Panc1 (cell line): ENCODE measurements at regions of chr2 and their contacts with region 1.

Region 1: DNA sequence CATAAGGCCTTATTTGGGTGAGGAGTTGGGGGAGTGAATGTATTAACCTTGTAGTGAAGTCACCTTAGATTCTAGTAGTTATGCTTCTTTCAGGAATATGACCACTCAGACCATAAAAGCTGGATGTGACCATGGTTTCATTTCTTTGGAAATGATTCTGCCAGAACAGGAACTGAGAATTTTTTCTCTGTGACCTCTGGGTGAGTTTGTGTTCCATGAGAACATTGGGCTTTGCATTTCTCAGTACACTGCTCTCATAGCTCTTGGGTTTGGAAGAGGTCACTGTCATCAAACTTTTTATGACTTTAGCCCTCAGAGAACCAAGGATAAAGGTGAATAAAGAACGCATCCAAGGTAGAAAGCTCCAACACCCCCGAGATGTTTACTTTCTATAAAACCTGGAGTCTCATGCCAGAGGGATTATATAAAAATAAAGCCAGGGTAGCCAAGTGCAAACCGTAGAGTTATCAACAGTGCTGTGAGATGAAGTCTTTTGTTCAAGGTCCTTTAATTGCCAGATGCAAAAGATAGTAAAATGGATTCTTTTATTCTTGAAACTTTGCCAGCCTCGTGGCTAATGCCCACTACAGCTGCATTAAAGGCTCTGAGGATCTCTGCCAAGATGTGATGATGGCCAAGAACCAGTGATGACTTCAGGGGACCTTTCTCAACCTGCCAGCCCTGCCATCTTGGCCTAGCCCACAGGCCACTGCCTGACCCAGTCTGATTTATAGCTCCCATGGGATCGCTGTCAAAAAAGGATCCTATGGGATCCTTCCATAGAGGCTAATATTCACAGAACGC is 27.8 kb upstream of the MAT2A start:
- DNase-seq: no peak
- ATAC-seq: peak; percentile 87
- H3K4me3 ChIP-seq: no peak overlapping the region
- H3K27ac ChIP-seq: peak overlapping the region; percentile 94
- H3K4me1 ChIP-seq: peaks cover 64% of the 10 kb centered on the region
- H3K27me3 ChIP-seq: no peaks in the 10 kb centered on the region
- CTCF ChIP-seq: no peak

Region 2: GRCh38 chr2:84676295-84676694 is 834.9 kb before region 1 on chr2:
- CTCF ChIA-PET with region 1: no interaction called
- POLR2A ChIA-PET with region 1: no interaction called
- in situ Hi-C with region 1: no loop called
- intact Hi-C with region 1: no loop called
- DNase-seq: no peak
- ATAC-seq: no peak
- H3K4me3 ChIP-seq: no peak overlapping the region
- H3K27ac ChIP-seq: no peak overlapping the region
- H3K4me1 ChIP-seq: no peaks in the 10 kb centered on the region
- H3K27me3 ChIP-seq: peaks cover 4% of the 10 kb centered on the region; the same call in 1 of the 2 replicates
- CTCF ChIP-seq: no peak

Region 3: DNA sequence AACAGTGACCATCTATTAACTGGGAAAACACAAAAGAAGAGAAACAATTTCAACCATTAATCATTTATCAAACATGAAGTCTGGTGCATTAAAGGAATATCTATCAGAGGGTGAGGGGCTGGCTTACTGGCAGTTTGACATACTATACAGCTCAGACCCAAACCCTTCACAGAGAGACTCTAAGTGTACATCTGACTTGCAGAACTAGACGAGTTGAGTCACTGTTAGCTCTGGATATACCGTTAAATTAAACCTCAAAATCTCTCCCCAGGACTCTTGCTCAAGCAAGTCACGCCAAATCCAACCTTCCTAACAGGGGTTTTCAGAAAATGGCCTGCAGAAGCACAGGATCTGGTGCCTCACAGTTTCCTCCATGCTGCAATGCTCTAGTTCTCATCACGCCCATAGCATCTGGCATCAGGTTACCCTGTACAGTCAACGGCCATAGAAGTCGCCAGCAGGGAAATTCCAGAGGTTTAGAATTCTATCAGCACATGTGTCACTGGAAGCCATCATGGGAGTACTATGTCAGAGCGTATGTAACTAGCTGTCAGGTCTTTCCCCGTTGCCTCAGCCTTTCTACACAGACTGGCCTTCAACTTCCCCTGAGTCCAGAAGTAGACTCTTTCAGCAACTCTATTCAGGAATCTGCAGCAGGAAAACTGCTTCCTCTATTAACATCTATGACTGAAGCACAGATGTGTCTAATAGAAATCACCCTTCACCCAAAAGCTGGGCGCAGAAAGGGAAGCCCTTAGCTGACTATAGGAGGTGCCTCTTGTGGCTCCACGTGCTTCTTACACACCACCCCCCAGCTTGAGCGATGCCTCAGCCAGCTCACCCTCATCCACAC is 192.8 kb before region 1 on chr2:
- CTCF ChIA-PET with region 1: no interaction called
- POLR2A ChIA-PET with region 1: no interaction called
- in situ Hi-C with region 1: no loop called
- intact Hi-C with region 1: no loop called
- DNase-seq: no peak
- ATAC-seq: peak; percentile 31; the same call in 1 of the 2 replicates
- H3K4me3 ChIP-seq: no peak overlapping the region
- H3K27ac ChIP-seq: no peak overlapping the region
- H3K4me1 ChIP-seq: no peaks in the 10 kb centered on the region
- H3K27me3 ChIP-seq: no peaks in the 10 kb centered on the region
- CTCF ChIP-seq: no peak

Region 4: DNA sequence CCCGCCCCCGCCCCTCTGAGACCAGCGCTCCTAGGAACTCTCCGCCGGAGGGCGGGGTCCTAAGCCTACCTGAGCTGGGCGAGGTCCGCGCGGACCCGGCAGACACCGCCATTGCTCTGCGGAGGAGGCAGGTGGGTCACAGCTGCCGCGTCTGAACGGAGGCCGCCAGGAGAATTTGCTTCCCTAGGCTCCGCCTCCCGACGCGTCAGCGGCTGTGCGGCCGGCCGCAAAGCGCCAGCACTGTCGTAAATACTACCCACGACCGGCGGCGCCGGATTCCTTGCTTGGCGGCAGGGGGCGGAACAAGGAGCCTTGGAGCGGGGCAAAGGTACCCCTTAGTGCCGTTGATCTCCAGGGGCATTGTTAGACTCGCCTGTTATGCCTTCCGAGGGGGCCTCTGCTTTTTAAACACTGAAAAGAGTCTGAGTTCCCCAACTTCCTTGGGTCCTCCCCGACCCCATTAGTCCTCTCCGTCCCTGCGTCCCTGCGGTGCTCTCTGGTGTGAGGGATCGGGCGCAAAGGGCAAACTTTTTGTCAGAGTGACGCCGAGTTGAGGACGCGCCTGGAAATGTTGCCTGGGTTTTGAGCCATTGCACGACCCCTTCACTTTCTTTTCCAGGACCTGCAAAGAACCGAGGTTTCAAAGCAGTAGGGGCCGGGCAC is 50.2 kb after region 1 on chr2 and contains the start of gene GGCX:
- CTCF ChIA-PET with region 1: no interaction called
- POLR2A ChIA-PET with region 1: interaction called, 11 read pairs
- in situ Hi-C with region 1: no loop called
- intact Hi-C with region 1: no loop called
- DNase-seq: no peak
- ATAC-seq: peak; percentile 97
- H3K4me3 ChIP-seq: peak within 1 kb of the TSS; percentile 71 to 95
- H3K27ac ChIP-seq: peak within 1 kb of the TSS; percentile 95
- H3K4me1 ChIP-seq: peaks cover 6% of the 10 kb centered on the region; the same call in 1 of the 2 replicates
- H3K27me3 ChIP-seq: no peaks in the 10 kb centered on the region
- CTCF ChIP-seq: no peak
- total RNA-seq, gene GGCX: 64.1 TPM

Region 5: GRCh38 chr2:85712849-85713602 is 201.8 kb after region 1 on chr2:
- CTCF ChIA-PET with region 1: no interaction called
- POLR2A ChIA-PET with region 1: no interaction called
- in situ Hi-C with region 1: no loop called
- intact Hi-C with region 1: no loop called
- DNase-seq: no peak
- ATAC-seq: no peak
- H3K4me3 ChIP-seq: no peak overlapping the region
- H3K27ac ChIP-seq: no peak overlapping the region
- H3K4me1 ChIP-seq: no peaks in the 10 kb centered on the region
- H3K27me3 ChIP-seq: no peaks in the 10 kb centered on the region; the same call in 1 of the 2 replicates
- CTCF ChIP-seq: no peak